Transverse colon (tissue), 4 donors: ENCODE measurements at regions of chr6 and their contacts with region 1.

Region 1: GRCh38 chr6:142387997-142388815 is 86.4 kb downstream of the ADGRG6 start:
- DNase-seq: no peak
- H3K4me3 ChIP-seq: no peak overlapping the region
- H3K27ac ChIP-seq: no peak overlapping the region
- H3K4me1 ChIP-seq: no peaks in the 10 kb centered on the region
- H3K27me3 ChIP-seq: no peaks in the 10 kb centered on the region
- CTCF ChIP-seq: peak; percentile 39 to 53 (median 48)
- EP300 ChIP-seq: no peak
- POLR2A ChIP-seq: no peak

Region 2: DNA sequence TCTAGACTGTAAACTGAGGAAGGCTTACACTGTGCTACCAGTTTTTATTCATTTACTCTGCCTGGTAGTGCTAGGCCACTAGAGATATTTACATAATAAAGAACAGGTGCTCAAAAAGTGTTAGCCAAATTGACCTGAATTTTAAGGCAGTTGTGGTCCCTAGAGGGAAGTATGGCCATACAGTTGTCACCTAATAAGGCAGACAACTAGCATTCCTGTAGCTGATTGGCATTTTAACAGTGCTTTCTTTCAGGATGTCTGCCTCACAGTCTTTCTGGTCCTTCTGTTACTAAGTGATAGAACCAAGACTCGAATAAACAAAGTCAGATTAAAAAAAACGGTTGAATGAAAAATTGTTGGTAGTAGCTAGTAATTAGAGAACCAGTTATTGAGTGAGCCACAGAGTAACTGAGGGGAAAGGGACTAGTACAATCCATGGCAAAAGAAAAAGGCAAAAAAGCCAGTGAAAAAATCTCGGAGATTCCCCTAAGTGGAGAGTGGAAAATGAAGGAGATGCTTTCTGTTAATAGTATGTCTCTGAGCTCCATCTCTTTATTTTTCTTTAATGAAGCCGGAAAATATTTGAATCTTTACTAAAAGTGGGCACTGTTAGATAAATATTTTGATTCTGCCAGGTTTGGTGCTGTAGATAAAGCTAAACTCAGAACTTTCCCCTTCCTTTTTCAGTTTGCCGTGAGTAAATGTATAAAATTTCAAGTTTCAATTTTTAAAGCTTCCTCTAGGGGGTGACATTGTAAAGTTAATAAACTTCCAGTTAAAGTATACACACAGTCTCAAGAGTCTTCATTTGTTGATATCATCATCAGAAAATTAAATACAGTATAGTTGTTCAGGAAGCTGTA is 232.1 kb before region 1 on chr6:
- in situ Hi-C with region 1: loop called in 3 of 4 experiments (anchors 25 kb)
- intact Hi-C with region 1: no loop called
- DNase-seq: no peak
- H3K4me3 ChIP-seq: no peak overlapping the region
- H3K27ac ChIP-seq: no peak overlapping the region
- H3K4me1 ChIP-seq: peaks cover 0 to 15% (median 2%) of the 10 kb centered on the region in 4 donors
- H3K27me3 ChIP-seq: no peaks in the 10 kb centered on the region
- CTCF ChIP-seq: peak; percentile 23 to 43 (median 27)
- EP300 ChIP-seq: no peak
- POLR2A ChIP-seq: no peak

Region 3: GRCh38 chr6:142414446-142414845 is 26.2 kb after region 1 on chr6:
- in situ Hi-C with region 1: no loop called
- intact Hi-C with region 1: loop called (anchors 2 kb)
- DNase-seq: no peak
- H3K4me3 ChIP-seq: no peak overlapping the region
- H3K27ac ChIP-seq: no peak overlapping the region
- H3K4me1 ChIP-seq: no peaks in the 10 kb centered on the region
- H3K27me3 ChIP-seq: no peaks in the 10 kb centered on the region
- CTCF ChIP-seq: no peak
- EP300 ChIP-seq: no peak
- POLR2A ChIP-seq: no peak